ENCODE measurements at regions of chr16 and their contacts with region 1.

Region 1: GRCh38 chr16:28211712-28212534 is at the start of gene XPO6:
- DNase-seq: peak; percentile 100
- ATAC-seq: peak; percentile 82
- H3K4me3 Mint-ChIP-seq: peak within 1 kb of the TSS; percentile 96
- H3K27ac Mint-ChIP-seq: peak within 1 kb of the TSS; percentile 99
- H3K4me1 Mint-ChIP-seq: peaks cover 32% of the 10 kb centered on the region
- H3K27me3 Mint-ChIP-seq: no peaks in the 10 kb centered on the region
- total RNA-seq, gene XPO6: 241 to 368 TPM

Region 2: DNA sequence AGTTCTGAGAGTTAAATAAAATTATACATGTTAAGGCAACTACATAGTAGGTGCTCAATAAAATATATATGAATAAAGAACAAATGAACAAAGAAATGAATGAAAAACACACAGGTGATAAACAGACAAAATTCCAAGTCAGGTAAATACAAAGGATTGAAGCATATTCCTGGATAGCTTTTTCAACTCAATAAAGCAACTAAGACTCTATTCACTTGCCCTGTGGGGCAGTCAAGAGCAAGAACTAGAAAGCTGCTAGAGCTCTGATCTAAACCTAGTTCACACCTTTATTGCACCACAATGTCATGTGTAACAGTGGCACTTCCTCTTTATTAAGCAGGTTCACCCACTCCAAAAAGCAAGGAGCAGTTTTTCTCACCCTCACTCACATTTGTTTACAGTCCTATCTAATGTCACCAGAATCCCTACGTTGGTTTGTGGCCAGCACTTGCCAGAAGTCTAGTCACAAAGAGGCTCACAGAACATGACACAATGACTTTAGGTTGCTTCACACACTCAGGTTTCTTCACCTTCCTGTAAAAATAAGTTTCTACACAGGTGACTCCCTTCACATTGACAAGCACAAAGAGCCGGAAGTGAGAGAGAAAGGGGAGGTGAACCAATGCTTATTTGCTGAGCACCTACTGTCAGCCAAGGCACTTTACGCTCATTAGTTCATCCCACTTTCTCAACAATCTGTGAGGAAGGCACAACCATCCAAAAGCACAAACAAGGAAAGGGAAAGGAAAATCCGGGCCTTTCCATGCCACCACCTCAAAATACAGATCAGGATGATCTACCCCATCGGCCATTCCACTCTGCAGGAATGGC is 70.9 kb before region 1 on chr16:
- CTCF ChIA-PET with region 1: interaction called, 18 read pairs
- POLR2A ChIA-PET with region 1: no interaction called
- intact Hi-C with region 1: loop called (anchors 1 kb)
- DNase-seq: peak; percentile 85
- ATAC-seq: peak; percentile 82
- H3K4me3 Mint-ChIP-seq: peak overlapping the region; percentile 60
- H3K27ac Mint-ChIP-seq: peak overlapping the region; percentile 99
- H3K4me1 Mint-ChIP-seq: peaks cover 85% of the 10 kb centered on the region
- H3K27me3 Mint-ChIP-seq: no peaks in the 10 kb centered on the region

Region 3: GRCh38 chr16:28181515-28181914 is 30.4 kb before region 1 on chr16:
- CTCF ChIA-PET with region 1: interaction called, 5 read pairs
- POLR2A ChIA-PET with region 1: interaction called, 4 read pairs
- intact Hi-C with region 1: loop called (anchors 1 to 2 kb)
- DNase-seq: no peak
- ATAC-seq: peak; percentile 28
- H3K4me3 Mint-ChIP-seq: peak overlapping the region; percentile 64
- H3K27ac Mint-ChIP-seq: peak overlapping the region; percentile 98
- H3K4me1 Mint-ChIP-seq: peaks cover 78% of the 10 kb centered on the region
- H3K27me3 Mint-ChIP-seq: no peaks in the 10 kb centered on the region

Region 4: GRCh38 chr16:28193530-28194423 is 18.1 kb before region 1 on chr16:
- CTCF ChIA-PET with region 1: interaction called, 13 read pairs
- POLR2A ChIA-PET with region 1: interaction called, 36 read pairs
- intact Hi-C with region 1: loop called (anchors 1 to 2 kb)
- DNase-seq: peak; percentile 78
- ATAC-seq: peak; percentile 67
- H3K4me3 Mint-ChIP-seq: peak overlapping the region; percentile 66
- H3K27ac Mint-ChIP-seq: peak overlapping the region; percentile 92
- H3K4me1 Mint-ChIP-seq: peaks cover 81% of the 10 kb centered on the region
- H3K27me3 Mint-ChIP-seq: no peaks in the 10 kb centered on the region

Region 5: GRCh38 chr16:28309811-28310311 is 97.9 kb after region 1 on chr16:
- CTCF ChIA-PET with region 1: interaction called, 4 read pairs
- POLR2A ChIA-PET with region 1: no interaction called
- intact Hi-C with region 1: loop called in 1 of 2 experiments (anchors 5 kb)
- DNase-seq: peak; percentile 92
- ATAC-seq: peak; percentile 91
- H3K4me3 Mint-ChIP-seq: peak overlapping the region; percentile 6
- H3K27ac Mint-ChIP-seq: peak overlapping the region; percentile 91
- H3K4me1 Mint-ChIP-seq: peaks cover 48% of the 10 kb centered on the region
- H3K27me3 Mint-ChIP-seq: no peaks in the 10 kb centered on the region